ENCODE measurements at regions of chr17 and their contacts with region 1.

Region 1: GRCh38 chr17:15171167-15172047 is 93.7 kb downstream of the PMP22 start:
- DNase-seq: peak; percentile 87
- H3K4me3 ChIP-seq: no peak overlapping the region
- H3K27ac ChIP-seq: no peak overlapping the region
- H3K4me1 ChIP-seq: peaks cover 14% of the 10 kb centered on the region
- H3K27me3 ChIP-seq: peaks cover 4% of the 10 kb centered on the region; the same call in 1 of the 2 replicates

Region 2: DNA sequence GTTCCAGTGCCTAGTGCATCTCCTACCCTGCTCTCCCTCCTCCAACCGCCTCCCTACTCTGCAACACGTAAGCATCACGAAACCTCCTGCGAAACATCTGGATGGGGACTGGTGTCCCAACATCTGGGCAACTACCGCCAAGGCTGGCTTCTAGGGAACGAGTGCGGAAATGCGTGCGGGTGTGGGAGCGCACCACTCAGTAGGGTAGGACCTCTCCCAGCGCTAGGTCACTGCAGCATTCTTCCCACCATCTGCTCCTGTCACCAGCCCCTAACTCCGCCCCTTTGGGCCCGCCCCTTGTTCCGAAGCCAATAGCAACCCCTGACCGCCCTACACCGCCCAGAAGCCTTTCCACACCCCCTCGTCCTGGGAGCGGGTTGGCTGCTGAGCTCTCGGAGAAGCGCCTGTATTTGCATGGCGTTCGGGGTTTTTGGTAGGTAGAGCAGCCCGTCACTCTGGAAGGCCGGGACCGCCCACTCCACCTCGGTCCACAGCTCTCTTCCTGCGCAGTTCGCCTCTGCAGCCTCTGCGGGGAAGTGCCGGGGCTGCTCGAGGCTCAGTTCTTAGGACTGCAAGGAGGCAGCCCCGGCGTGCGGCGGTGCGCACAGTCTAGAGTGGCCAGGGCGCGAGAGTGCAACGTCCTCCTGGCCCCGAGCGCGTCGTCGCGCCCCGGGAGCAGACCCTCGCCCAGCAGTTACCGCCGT is 870.7 kb before region 1 on chr17 and contains the start of gene HS3ST3B1:
- in situ Hi-C with region 1: loop called (anchors 25 kb)
- DNase-seq: peak; percentile 99
- H3K4me3 ChIP-seq: peak within 1 kb of the TSS; percentile 91
- H3K27ac ChIP-seq: peak within 1 kb of the TSS; percentile 86
- H3K4me1 ChIP-seq: peaks cover 30% of the 10 kb centered on the region
- H3K27me3 ChIP-seq: no peaks in the 10 kb centered on the region
- total RNA-seq, gene HS3ST3B1: 41.9 and 45.5 TPM in 2 replicates

Region 3: DNA sequence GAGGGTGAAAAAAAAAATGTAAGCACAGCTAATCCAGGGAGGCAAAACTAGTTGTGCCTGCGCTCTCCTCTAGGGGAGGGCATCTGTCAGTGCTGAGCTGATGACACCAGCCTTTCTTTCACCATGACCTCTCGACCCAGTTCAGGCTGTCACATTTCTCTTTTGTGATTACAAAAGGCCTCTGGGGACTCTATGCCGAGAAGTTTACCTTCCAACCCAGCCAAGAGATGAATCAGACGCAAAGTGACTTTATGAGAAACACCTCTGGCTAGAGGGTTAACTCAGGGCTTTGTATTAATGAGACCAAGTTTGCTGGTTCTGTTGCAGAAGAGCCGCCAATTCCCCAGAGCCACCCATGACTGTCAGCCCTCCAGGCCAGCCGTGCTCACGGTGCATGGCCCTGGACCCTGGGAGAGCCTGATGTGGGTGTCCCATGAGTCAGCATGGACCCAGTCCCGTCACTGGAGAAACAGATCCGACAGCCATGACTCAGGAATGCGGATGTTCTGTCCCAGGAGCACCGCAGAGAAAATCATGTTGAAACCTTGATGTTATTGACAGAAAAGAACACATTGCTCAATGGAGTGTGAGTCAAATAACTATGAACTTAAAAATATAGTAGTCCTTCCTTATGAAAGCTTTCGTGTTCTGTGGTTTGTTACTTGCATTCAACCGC is 433.3 kb before region 1 on chr17:
- in situ Hi-C with region 1: no loop called
- DNase-seq: peak; percentile 98
- H3K4me3 ChIP-seq: no peak overlapping the region
- H3K27ac ChIP-seq: peak overlapping the region; percentile 79
- H3K4me1 ChIP-seq: peaks cover 21% of the 10 kb centered on the region
- H3K27me3 ChIP-seq: no peaks in the 10 kb centered on the region

Region 4: DNA sequence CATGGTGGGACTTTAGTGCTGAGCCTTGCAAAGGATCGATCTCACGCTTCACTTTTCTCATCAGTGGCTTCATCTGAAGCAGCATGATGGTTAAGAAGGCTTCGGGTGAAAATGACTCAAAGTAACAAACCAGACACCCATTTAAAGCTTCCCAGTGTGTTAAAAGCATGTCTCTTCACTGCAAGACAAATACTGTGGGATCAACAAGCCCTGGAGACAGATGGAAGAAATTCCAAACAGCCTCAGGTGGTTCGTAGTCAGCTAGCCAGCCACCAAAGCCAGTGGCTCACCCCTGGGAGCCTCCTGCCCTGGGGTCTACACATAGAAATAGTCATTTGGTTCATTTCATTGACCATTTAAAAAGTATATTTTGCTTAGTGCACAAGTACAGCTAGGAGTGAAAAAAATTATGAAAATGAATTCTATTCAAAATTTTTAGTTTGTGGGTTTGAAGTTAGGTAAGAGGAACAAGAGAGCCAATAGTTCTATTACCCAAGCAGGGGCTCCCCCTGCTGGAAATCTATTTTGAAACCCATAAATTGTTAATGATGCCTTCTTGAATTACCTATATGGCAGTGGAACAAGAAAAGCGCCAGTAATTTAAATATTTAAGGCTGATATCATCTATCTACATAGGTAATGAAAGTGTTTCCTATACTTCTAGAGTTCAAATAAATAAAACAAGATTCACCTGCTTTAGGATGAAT is 42.1 kb after region 1 on chr17:
- in situ Hi-C with region 1: no loop called
- DNase-seq: peak; percentile 50
- H3K4me3 ChIP-seq: no peak overlapping the region
- H3K27ac ChIP-seq: no peak overlapping the region
- H3K4me1 ChIP-seq: no peaks in the 10 kb centered on the region
- H3K27me3 ChIP-seq: no peaks in the 10 kb centered on the region